Left colon (tissue), 2 donors: ENCODE measurements at regions of chr17 and their contacts with region 1.

Region 1: DNA sequence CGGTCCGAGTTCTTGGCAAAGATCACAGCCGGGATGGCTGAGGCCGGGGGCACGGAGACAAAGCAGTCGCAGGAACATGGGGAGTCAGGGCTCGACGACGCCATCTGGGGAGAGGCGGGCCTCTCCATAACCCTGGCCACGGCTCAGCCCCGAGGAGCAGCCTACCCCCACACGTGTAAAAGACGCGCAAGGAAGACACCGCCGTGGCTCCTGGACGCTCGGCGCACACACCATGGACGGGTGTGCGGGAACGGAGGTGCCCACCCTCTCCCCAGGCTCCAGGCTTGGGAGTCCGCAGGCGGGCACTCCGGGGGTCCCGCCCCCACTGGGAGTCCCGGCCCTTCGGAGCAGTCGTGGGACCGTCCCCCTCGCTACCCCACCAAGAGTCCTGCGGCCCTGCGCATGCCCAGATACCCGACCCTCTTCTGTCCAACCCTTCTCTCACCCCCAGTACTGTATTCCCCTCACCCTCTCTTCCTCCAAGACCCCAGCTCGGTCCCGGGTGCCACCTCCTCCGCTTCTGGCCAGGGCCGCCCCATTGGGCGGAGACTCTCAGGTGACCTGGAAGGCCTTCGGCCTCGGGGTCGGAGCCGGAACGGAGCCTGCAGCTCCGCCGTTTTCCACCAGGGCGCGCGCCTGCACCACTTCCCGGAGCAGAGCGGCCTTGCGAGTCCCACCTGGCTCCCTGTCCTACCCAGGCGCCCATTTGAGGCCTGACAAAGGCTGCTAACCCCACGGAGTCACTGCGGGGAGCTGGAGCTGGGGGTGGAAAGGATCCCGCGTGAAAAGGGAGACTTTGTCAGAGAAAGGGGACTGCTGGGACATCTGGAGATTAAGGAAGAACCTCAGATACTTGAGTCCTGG is at the start of gene SCRN2:
- DNase-seq: peak; percentile 89 to 93
- ATAC-seq: peak; percentile 84
- total RNA-seq, gene SCRN2: 51.0 to 53.7 TPM

Region 2: GRCh38 chr17:47889734-47890529 is 49.0 kb after region 1 on chr17:
- intact Hi-C with region 1: loop called (anchors 2 to 5 kb)
- DNase-seq: peak; percentile 84 to 96
- ATAC-seq: peak; percentile 64

Region 3: DNA sequence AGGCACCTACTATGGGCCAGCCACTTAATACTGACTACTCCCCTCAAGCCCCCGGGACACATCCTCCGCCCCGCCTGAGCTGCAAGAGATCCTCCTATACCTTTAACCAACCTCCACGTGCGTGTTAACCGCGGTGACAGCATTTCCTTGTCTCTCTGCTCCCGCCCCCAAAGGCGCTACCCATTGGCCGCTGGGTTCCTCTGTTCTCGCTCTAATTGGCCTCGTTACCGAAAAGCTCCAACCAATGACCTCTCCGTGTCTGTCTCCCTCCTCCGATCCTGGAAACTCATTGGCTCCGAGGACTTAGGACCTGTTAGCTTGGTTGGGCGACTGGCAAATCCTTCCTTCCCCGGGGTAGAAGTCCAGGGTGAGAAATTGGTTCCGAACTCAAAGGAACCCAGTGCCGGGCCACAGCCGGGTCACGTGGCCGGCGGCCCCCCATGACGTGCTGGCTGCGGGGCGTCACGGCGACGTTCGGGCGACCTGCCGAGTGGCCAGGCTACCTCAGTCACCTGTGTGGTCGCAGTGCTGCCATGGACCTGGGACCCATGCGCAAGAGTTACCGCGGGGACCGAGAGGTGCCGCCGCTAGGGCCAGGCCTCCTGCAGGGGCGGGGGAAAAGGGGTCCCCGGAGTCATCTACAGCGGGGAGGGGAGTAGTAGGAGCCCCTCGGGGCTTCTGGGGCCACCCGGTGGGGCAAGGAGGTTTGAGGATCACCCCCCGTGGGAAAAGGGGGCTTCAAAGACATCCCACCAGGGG is 100.4 kb after region 1 on chr17 and contains the start of gene PNPO:
- intact Hi-C with region 1: loop called in 1 of 2 experiments (anchors 10 kb)
- DNase-seq: peak; percentile 93 to 97
- ATAC-seq: peak; percentile 83
- total RNA-seq, gene PNPO: 24.9 to 26.0 TPM